Activated T-helper 1 cell treated with anti-CD3 and anti-CD28 coated beads, Interleukin-12 subunit alpha, Interleukin-12 subunit beta, Interleukin-2, Interleukin-4 antibody, amounts not matched to agents 30 ng/mL and 10 ng/mL and 1 ng/mL, durations not matched to agents 14 hours and 24 hours and 36 hours (primary cell): ENCODE measurements at regions of chr5 and their contacts with region 1.

Region 1: DNA sequence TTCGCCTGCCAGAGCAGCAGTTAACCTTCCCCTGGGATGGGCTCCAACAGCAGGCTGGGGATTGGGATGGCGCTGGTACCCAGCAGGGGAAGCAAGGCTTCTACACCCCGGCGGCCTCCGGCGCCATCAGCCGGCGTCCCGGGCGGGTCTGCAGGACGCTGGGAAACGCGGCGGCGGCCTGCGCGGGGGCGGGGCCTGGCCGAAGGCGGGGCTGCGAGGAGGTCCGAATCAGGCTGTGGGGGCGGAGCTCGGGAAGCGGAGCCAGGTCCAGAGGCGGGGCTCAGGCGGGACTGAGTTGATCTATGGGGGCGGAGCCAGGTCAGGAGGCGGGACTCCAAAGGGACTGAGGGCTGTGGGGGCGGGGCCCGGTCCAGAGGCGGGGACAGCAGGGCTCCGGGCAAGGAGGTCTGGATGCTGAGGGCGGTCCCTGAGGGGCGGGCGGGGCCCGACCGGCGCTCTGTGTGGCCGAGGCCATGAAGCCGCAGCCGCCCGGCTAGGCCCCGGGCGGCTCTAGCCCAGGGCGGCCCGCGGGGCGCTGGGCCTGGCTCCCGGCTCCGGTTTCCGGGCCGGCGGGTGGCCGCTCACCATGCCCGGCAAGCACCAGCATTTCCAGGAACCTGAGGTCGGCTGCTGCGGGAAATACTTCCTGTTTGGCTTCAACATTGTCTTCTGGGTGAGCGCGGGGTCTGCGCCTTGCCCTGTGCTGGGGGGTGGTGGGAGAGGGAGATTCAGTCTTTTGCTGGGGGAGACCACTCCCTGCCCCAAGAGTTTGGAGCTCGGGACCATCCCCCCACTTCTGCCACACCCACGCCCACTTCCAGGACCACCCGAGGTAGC is at the start of gene TSPAN17:
- DNase-seq: peak; percentile 99
- H3K4me3 Mint-ChIP-seq: peak within 1 kb of the TSS; percentile 88
- H3K27ac Mint-ChIP-seq: peak within 1 kb of the TSS; percentile 93
- H3K4me1 Mint-ChIP-seq: peaks cover 49% of the 10 kb centered on the region
- H3K27me3 Mint-ChIP-seq: no peaks in the 10 kb centered on the region
- total RNA-seq, gene TSPAN17: 34.1 and 35.3 TPM in 2 replicates

Region 2: GRCh38 chr5:176388444-176389134 is 258.7 kb before region 1 on chr5 and contains the starts of genes HIGD2A and NOP16:
- intact Hi-C with region 1: loop called (anchors 1 kb)
- DNase-seq: peak; percentile 96
- H3K4me3 Mint-ChIP-seq: peak within 1 kb of the TSS; percentile 100
- H3K27ac Mint-ChIP-seq: peak within 1 kb of the TSS; percentile 98
- H3K4me1 Mint-ChIP-seq: peaks cover 44% of the 10 kb centered on the region
- H3K27me3 Mint-ChIP-seq: no peaks in the 10 kb centered on the region
- total RNA-seq, gene HIGD2A: 93.2 and 93.5 TPM in 2 replicates
- total RNA-seq, gene NOP16: 111 TPM in 2 replicates

Region 3: GRCh38 chr5:176543428-176544173 is 103.6 kb before region 1 on chr5:
- intact Hi-C with region 1: loop called (anchors 1 kb)
- DNase-seq: peak; percentile 74
- H3K4me3 Mint-ChIP-seq: peak overlapping the region; percentile 95
- H3K27ac Mint-ChIP-seq: peak overlapping the region; percentile 95
- H3K4me1 Mint-ChIP-seq: peaks cover 51% of the 10 kb centered on the region
- H3K27me3 Mint-ChIP-seq: no peaks in the 10 kb centered on the region

Region 4: GRCh38 chr5:176568657-176569056 is 78.6 kb before region 1 on chr5:
- intact Hi-C with region 1: no loop called
- DNase-seq: no peak
- H3K4me3 Mint-ChIP-seq: no peak overlapping the region
- H3K27ac Mint-ChIP-seq: no peak overlapping the region
- H3K4me1 Mint-ChIP-seq: peaks cover 5% of the 10 kb centered on the region
- H3K27me3 Mint-ChIP-seq: peaks cover 7% of the 10 kb centered on the region

Region 5: GRCh38 chr5:176619203-176619568 is 28.1 kb before region 1 on chr5:
- intact Hi-C with region 1: loop called (anchors 1 kb)
- DNase-seq: peak; percentile 75
- H3K4me3 Mint-ChIP-seq: no peak overlapping the region
- H3K27ac Mint-ChIP-seq: no peak overlapping the region
- H3K4me1 Mint-ChIP-seq: peaks cover 7% of the 10 kb centered on the region
- H3K27me3 Mint-ChIP-seq: peaks cover 67% of the 10 kb centered on the region

Region 6: GRCh38 chr5:177086924-177087706 is 439.9 kb after region 1 on chr5:
- intact Hi-C with region 1: loop called (anchors 1 kb)
- DNase-seq: peak; percentile 48
- H3K4me3 Mint-ChIP-seq: no peak overlapping the region
- H3K27ac Mint-ChIP-seq: no peak overlapping the region
- H3K4me1 Mint-ChIP-seq: peaks cover 7% of the 10 kb centered on the region
- H3K27me3 Mint-ChIP-seq: peaks cover 45% of the 10 kb centered on the region